GM13977 (cell line): ENCODE measurements at regions of chr7 and their contacts with region 1.

Region 1: GRCh38 chr7:35519971-35520809 is 174.7 kb downstream of the HERPUD2 start:
- DNase-seq: peak; percentile 73
- CTCF ChIP-seq: peak; percentile 84

Region 2: GRCh38 chr7:35185907-35186731 is 334.1 kb before region 1 on chr7:
- in situ Hi-C with region 1: loop called (anchors 25 kb)
- DNase-seq: peak; percentile 1
- CTCF ChIP-seq: no peak

Region 3: GRCh38 chr7:35605760-35606159 is 85.6 kb after region 1 on chr7:
- in situ Hi-C with region 1: no loop called
- DNase-seq: no peak
- CTCF ChIP-seq: no peak